ENCODE measurements at regions of chr15 and their contacts with region 1.

Region 1: DNA sequence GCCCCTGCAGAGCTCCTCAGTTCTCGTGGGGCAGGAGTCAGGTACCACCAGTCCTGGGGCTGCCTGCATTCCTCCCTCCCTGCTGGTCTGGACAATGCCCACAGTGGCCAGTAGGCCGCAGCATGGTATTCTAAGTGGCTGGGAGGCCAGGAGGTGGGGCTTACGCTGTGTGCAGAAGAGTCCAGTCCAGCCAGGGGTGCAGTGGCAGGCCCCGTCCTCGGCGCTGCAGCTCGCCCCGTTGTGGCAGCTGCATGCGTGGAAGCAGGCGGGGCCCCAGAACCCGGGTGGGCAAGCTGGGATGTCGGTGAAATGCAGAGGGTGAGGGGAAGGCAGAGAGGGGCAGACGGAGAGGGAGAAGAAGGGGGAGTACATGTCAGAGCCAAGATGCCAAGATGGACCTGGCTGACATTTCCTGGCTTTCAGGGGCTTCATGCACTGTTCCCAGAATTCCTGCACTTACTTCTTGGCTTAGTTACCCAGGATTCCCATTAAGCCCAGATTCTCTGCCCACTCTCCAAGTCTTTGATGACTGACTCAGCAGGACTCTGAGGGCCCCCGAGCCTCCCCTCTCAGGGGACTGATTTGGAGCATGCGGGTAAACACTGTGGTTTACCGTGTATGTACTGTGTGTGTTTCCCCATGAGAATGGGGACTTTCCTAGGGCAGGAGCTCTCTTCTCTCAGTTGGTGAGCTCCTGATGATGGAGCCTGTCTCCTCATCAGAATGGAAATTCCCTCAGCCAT is 47.5 kb downstream of the RAB11A start:
- DNase-seq: no peak
- H3K4me3 ChIP-seq: no peak overlapping the region
- H3K27ac ChIP-seq: no peak overlapping the region
- H3K4me1 ChIP-seq: peaks cover 0 to 6% of the 10 kb centered on the region in 2 donors
- H3K27me3 ChIP-seq: no peaks in the 10 kb centered on the region
- CTCF ChIP-seq: peak; percentile 38 to 62 (median 39)

Region 2: GRCh38 chr15:65824031-65824743 is 92.6 kb before region 1 on chr15:
- intact Hi-C with region 1: no loop called
- DNase-seq: peak in 1 of 2 donors; percentile 71
- H3K4me3 ChIP-seq: no peak overlapping the region
- H3K27ac ChIP-seq: no peak overlapping the region
- H3K4me1 ChIP-seq: peaks cover 0 to 5% of the 10 kb centered on the region in 2 donors
- H3K27me3 ChIP-seq: no peaks in the 10 kb centered on the region
- CTCF ChIP-seq: peak; percentile 28 to 69 (median 49)

Region 3: DNA sequence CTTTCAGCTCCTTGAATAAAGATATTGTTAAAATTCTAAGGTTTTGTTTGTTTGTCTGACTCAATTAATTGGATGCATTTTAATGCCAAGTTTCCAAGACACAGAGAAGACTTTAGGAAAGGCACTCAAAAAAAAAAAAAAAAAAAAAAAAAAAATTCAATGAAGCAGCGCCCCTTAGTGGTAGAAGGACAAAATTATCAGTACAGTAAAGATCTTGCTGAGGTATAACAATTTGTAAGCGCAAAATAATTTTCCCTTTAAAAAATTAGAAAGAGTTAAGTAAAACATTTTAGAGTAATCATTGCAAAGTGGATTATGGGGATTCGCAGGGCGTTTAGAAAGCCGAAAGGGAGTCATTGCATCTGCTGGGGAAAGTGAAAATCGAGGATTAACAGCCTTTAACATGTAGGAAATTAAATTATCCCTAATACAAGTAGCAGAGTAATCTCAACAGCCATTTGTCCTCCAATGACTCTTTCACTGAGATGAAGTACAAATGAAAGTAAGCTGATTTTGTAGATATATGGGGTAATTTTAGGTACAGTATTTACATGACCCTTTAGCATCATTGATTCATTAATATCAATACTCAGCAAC is 370.7 kb after region 1 on chr15:
- intact Hi-C with region 1: loop called (anchors 5 kb)
- DNase-seq: no peak
- H3K4me3 ChIP-seq: no peak overlapping the region
- H3K27ac ChIP-seq: no peak overlapping the region
- H3K4me1 ChIP-seq: peaks cover 4 to 9% of the 10 kb centered on the region in 2 donors
- H3K27me3 ChIP-seq: no peaks in the 10 kb centered on the region
- CTCF ChIP-seq: peak in 2 of 3 experiments; percentile 46 to 52

Measured in ascending aorta (tissue), 2 donors.